Adrenal gland (tissue), 19 donors: ENCODE measurements at regions of chr13 and their contacts with region 1.

Region 1: DNA sequence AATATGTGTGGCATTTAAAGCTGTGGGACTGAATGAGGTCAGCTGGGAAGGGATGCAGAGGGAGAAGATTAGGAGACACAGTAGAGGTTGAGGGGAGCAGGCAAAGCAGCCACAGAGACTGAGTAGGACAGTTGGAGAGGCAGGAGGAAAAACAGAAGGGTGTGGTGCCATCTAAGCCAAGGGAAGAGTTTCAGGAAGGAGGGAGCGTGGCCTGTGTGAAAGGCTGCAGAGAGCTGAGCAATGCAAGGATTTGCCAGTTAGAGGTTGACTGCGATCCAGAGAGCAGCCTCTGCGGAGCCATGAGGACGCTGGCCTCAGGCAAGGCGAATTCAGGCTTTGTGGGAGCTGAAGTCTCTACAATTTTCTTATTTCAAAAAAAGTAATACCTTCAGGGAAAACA is 28.9 kb downstream of the SOX21 start:
- DNase-seq: no peak
- H3K4me3 ChIP-seq: no peak overlapping the region
- H3K27ac ChIP-seq: no peak overlapping the region
- H3K4me1 ChIP-seq: no peaks in the 10 kb centered on the region
- H3K27me3 ChIP-seq: peaks cover 3% of the 10 kb centered on the region
- CTCF ChIP-seq: no peak
- POLR2A ChIP-seq: no peak

Region 2: GRCh38 chr13:94947965-94948371 is 264.6 kb after region 1 on chr13:
- intact Hi-C with region 1: no loop called
- DNase-seq: no peak
- H3K4me3 ChIP-seq: no peak overlapping the region
- H3K27ac ChIP-seq: no peak overlapping the region
- H3K4me1 ChIP-seq: no peaks in the 10 kb centered on the region
- H3K27me3 ChIP-seq: no peaks in the 10 kb centered on the region
- CTCF ChIP-seq: no peak
- POLR2A ChIP-seq: no peak

Region 3: DNA sequence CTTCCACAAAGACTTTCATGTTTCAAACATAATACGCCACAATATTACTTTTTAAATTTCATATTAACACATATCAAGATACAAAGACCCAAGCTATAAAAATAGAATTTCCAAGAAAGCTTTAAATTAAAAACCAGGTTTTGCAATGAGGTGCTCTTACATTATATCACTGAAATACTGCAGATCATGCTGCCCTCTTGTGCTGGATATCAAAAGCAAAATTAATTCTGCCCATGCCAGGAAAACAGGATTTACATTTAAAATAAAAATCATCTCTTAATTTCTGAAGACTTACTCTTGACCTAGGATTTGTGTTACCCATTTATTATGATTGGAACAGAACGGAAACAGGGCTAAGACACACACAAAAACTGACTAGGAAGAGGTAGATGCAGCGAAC is 472.8 kb after region 1 on chr13:
- intact Hi-C with region 1: loop called in 1 of 2 experiments (anchors 10 kb)
- DNase-seq: no peak
- H3K4me3 ChIP-seq: no peak overlapping the region
- H3K27ac ChIP-seq: no peak overlapping the region
- H3K4me1 ChIP-seq: no peaks in the 10 kb centered on the region
- H3K27me3 ChIP-seq: no peaks in the 10 kb centered on the region
- CTCF ChIP-seq: peak in 3 of 6 experiments; percentile 9 to 37 (median 37)
- POLR2A ChIP-seq: no peak